ENCODE measurements at regions of chr18 and their contacts with region 1.

Region 1: GRCh38 chr18:8988261-8988871 is 114.1 kb upstream of the NDUFV2 start:
- DNase-seq: peak in 1 of 2 donors; percentile 66
- H3K4me3 ChIP-seq: no peak overlapping the region
- H3K27ac ChIP-seq: no peak overlapping the region
- H3K4me1 ChIP-seq: peaks cover 0 to 3% of the 10 kb centered on the region in 2 donors
- H3K27me3 ChIP-seq: no peaks in the 10 kb centered on the region
- CTCF ChIP-seq: peak; percentile 27 to 77 (median 70)

Region 2: DNA sequence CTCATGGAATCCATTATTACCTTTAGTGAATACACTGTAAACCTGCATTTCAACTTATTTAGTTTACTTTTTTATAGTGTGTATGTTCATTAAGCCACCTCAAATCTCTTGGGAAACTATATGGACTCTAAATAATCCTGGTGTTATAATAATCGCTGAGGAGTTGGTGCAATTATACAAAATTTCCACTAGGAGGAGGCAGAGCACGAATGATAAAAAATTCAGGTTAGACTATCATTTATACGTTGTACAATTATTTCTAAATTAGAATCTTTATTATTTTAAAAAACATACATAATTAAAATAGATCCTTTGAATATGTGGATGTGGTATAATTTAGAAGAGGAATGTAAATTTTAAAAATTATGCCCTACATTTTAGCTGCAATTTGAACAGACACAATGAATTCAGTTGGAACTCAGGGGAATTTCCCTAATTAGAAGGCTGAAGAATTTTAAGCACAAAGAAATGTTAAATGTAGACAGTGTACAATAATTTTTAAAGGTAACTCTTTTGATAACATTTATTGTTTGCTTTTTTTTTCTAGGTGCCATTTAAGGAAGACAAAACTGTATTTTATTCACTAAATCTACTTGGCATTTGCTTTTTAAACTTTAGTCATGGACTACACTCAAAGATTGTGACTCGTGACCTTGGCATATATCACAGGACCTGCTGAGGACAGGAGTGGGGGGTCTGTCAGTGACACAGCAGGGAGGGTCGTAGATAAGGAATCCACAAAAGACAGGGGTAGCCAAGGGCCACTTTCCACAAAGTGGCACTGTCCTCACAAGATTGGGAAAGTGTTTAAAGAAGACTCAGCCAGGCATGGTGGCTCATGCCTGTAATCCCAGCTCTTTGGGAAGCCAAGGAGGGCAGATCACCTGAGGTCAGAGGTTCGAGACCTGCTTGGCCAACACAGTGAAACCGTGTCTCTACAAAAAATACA is 333.6 kb before region 1 on chr18:
- intact Hi-C with region 1: loop called (anchors 2 kb)
- DNase-seq: no peak
- H3K4me3 ChIP-seq: no peak overlapping the region
- H3K27ac ChIP-seq: no peak overlapping the region
- H3K4me1 ChIP-seq: no peaks in the 10 kb centered on the region
- H3K27me3 ChIP-seq: no peaks in the 10 kb centered on the region
- CTCF ChIP-seq: peak; percentile 32 to 79 (median 78)

Region 3: GRCh38 chr18:8696749-8697211 is 291.6 kb before region 1 on chr18:
- intact Hi-C with region 1: loop called (anchors 2 kb)
- DNase-seq: peak in 1 of 2 donors; percentile 87
- H3K4me3 ChIP-seq: no peak overlapping the region
- H3K27ac ChIP-seq: no peak overlapping the region
- H3K4me1 ChIP-seq: no peaks in the 10 kb centered on the region
- H3K27me3 ChIP-seq: no peaks in the 10 kb centered on the region
- CTCF ChIP-seq: peak; percentile 69 to 90 (median 85)